ENCODE measurements at regions of chr6 and their contacts with region 1.

Region 1: GRCh38 chr6:30717042-30717844 is at the start of gene MDC1:
- DNase-seq: peak; percentile 100
- ATAC-seq: peak; percentile 81
- total RNA-seq, gene MDC1: 16.4 TPM

Region 2: DNA sequence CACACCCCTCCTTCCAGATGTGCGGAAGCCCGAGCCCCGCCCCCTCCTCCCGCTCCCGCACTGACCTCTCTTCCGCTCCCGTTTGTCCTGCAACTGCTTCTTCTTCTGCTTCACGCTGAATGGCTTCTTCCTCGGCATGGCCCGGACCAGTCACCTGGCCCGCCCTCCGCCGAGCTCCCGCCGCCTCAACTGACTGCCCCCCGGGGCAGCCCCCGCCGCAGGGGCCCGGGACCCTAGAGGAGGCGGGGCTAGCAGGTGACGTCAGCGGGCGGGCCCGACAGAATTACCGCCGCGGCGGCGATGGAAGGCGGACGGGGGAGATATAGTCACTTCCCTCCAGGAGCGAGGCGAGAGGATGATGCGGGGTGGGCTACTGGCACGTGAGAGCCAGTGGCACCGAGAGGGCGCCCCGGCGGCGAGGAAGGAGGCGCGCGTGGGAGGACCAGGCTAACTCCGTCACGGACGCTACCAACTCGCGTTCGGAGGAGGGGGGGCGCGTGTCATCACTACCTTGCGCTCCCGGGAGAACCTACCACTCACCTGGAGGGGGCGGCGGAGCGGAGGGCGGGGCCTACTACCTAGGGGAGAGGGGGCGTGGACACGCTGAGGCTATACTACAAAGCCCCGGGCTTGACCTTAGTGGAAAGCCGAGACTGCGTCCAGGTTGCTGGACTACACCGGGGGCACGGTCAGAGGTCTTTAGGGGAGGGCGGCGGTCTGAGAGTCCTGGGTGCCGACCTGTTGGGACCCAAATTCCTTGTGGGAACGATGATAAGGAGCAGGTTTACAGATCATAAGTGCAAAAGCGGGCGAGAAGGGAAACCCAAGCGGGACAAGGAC is 161.0 kb before region 1 on chr6 and contains the start of gene GNL1:
- intact Hi-C with region 1: loop called (anchors 5 kb)
- DNase-seq: peak; percentile 96
- ATAC-seq: peak; percentile 85
- total RNA-seq, gene GNL1: 17.6 TPM

Region 3: DNA sequence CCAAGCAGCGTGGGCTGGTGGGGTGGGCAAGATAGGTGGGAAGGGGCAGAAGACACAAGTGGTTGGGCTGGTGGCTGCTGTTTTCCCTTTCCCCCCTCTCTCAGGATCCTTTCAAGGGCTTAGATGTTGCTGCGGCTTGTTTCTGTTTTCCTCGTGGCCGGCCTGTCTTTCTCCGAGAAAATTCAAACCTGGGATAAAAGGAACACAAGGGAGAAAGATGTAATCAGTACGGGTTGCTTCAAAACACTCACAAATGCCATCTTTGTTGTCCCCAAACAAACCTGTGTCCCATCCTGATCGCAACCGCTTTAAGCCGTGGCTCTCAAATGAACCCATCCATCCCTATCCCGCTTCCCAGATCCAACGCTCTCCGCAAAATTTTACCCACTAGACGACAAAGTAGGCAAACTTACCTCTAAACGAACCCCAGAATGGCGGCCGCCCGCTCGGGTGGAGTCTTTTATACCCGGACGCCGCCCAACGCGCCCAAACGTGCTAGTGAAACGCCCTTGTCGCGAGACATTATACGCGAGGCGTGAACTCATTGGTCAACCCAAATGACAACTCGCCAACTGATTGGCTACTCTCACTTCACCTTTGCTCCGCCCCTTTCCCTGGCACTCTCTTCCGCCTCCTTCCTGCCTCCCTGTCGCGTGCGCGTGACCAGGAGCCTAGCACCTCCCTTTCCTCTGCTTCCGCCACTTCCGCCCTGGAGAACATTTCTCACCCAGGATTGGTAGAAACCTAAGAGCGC is 100.3 kb before region 1 on chr6 and contains the start of gene PPP1R10:
- intact Hi-C with region 1: loop called (anchors 5 kb)
- DNase-seq: peak; percentile 98
- ATAC-seq: peak; percentile 88
- total RNA-seq, gene PPP1R10: 29.6 TPM

Region 4: GRCh38 chr6:30678964-30679726 is 38.1 kb before region 1 on chr6:
- intact Hi-C with region 1: loop called (anchors 2 kb)
- DNase-seq: peak; percentile 92
- ATAC-seq: peak; percentile 87

Region 5: DNA sequence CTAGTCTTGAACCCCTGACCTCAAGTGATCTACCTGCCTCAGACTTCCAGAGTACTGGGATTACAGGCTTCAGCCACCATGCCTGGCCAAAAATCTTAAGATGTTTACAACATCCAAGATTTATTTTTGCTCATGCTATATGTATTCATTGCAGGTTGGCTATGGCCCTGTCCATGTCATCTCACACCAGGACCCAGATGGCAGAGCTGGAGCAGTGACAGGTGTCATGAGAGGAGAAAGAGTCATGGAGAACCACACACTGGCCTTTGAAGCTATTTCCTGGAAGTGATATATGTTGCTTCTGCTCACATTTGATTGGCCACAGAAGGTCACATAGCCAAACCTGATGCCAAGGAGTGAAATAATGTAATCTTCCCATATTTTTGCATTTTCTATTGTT is 153.3 kb after region 1 on chr6:
- intact Hi-C with region 1: no loop called
- DNase-seq: no peak
- ATAC-seq: no peak

Region 6: DNA sequence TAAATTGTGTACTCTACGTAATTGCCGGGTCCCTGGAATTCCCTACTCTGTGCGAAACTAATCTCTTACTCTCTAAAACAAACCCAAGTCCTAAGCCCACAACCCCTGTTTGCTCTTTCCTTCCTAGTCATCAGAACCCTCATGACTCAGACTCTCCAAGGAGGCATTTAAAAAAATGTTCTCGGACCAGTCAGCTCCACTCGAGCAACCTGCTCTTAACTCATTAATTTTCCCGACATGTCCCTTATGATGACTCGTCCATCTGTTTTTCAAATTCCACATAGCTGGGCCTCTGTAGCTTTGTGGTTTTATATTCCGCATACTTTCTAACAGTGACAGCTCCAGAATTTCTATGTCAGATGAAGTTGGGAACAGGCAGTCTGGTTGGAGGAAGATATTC is 290.5 kb after region 1 on chr6:
- intact Hi-C with region 1: no loop called
- DNase-seq: no peak
- ATAC-seq: no peak

Measured in Right ventricle myocardium superior (tissue), 1 donor.